Panc1 (cell line): ENCODE measurements at regions of chr11 and their contacts with region 1.

Region 1: DNA sequence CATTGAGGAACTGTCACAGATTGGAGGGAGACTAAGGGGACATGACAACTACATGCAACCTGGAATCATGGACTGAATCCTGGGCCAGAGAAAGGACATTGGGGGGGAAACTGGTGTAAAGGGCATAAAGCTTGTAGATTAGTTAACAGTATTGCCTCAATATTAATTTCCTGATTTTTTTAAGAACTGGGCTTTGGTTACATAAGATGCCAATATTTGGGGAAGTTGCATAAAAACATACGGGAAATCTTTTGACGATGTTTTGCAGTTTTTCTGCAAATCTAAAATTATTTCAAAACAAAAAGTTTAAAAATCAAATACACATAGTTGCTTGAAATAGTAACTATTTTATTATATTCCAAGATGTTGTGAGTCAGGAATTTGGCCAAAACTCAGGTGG is 2.9 kb upstream of the FOLR3 start:
- DNase-seq: no peak
- ATAC-seq: no peak
- H3K4me3 ChIP-seq: no peak overlapping the region
- H3K27ac ChIP-seq: no peak overlapping the region
- H3K4me1 ChIP-seq: no peaks in the 10 kb centered on the region
- H3K27me3 ChIP-seq: peaks cover 11% of the 10 kb centered on the region; the same call in 1 of the 2 replicates
- CTCF ChIP-seq: no peak

Region 2: DNA sequence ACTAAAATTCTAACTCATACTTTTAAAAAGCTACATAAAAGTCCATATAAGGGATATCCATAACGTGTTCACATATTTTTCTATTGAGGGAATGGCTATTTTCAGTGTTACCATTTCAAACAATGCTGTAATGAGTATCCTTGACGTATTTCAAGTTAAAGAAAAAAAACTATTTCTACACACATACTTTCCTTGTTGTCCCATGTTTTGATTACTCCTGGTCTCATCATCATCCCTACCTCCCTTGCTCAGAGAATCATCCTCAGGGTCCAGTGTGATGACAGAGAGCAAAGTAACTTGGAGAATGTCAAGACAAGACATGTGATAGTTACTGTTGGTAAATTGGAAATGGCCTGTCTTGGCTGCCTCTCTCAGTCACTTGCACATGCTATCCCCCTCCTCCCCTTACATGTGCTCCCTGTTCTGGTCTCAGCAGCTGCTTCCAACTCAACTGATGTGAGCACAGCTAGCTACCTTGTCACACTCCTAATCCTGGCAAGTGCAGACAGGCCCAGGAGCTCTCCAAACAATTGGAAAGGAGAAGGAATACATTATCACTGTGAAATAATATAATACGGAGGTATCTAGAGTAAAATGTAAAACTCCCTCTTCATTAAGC is 74.1 kb before region 1 on chr11:
- CTCF ChIA-PET with region 1: no interaction called
- POLR2A ChIA-PET with region 1: no interaction called
- in situ Hi-C with region 1: no loop called
- intact Hi-C with region 1: no loop called
- DNase-seq: no peak
- ATAC-seq: no peak
- H3K4me3 ChIP-seq: no peak overlapping the region
- H3K27ac ChIP-seq: no peak overlapping the region
- H3K4me1 ChIP-seq: no peaks in the 10 kb centered on the region
- H3K27me3 ChIP-seq: no peaks in the 10 kb centered on the region
- CTCF ChIP-seq: no peak

Region 3: GRCh38 chr11:72069787-72070251 is 62.8 kb before region 1 on chr11:
- CTCF ChIA-PET with region 1: no interaction called
- POLR2A ChIA-PET with region 1: interaction called, 12 read pairs
- in situ Hi-C with region 1: no loop called
- intact Hi-C with region 1: no loop called
- DNase-seq: peak; percentile 79
- ATAC-seq: peak; percentile 86
- H3K4me3 ChIP-seq: no peak overlapping the region
- H3K27ac ChIP-seq: peak overlapping the region; percentile 15; the same call in 1 of the 2 replicates
- H3K4me1 ChIP-seq: peaks cover 20% of the 10 kb centered on the region
- H3K27me3 ChIP-seq: no peaks in the 10 kb centered on the region
- CTCF ChIP-seq: no peak

Region 4: GRCh38 chr11:72222907-72223614 is 90.4 kb after region 1 on chr11:
- CTCF ChIA-PET with region 1: no interaction called
- POLR2A ChIA-PET with region 1: no interaction called
- in situ Hi-C with region 1: no loop called
- intact Hi-C with region 1: no loop called
- DNase-seq: peak; percentile 38
- ATAC-seq: peak; percentile 86
- H3K4me3 ChIP-seq: peak overlapping the region; percentile 95
- H3K27ac ChIP-seq: peak overlapping the region; percentile 89
- H3K4me1 ChIP-seq: peaks cover 22% of the 10 kb centered on the region
- H3K27me3 ChIP-seq: no peaks in the 10 kb centered on the region
- CTCF ChIP-seq: no peak